ENCODE measurements at regions of chr4 and their contacts with region 1.

Region 1: GRCh38 chr4:61795998-61796397 is 595.9 kb downstream of the ADGRL3 start:
- DNase-seq: no peak
- ATAC-seq: no peak
- H3K4me3 ChIP-seq: no peak overlapping the region
- H3K4me3 Mint-ChIP-seq: no peak overlapping the region
- H3K27ac ChIP-seq: no peak overlapping the region
- H3K27ac Mint-ChIP-seq: no peak overlapping the region
- H3K4me1 ChIP-seq: no peaks in the 10 kb centered on the region
- H3K4me1 Mint-ChIP-seq: no peaks in the 10 kb centered on the region
- H3K27me3 ChIP-seq: no peaks in the 10 kb centered on the region
- H3K27me3 Mint-ChIP-seq: no peaks in the 10 kb centered on the region
- CTCF ChIP-seq: no peak

Region 2: DNA sequence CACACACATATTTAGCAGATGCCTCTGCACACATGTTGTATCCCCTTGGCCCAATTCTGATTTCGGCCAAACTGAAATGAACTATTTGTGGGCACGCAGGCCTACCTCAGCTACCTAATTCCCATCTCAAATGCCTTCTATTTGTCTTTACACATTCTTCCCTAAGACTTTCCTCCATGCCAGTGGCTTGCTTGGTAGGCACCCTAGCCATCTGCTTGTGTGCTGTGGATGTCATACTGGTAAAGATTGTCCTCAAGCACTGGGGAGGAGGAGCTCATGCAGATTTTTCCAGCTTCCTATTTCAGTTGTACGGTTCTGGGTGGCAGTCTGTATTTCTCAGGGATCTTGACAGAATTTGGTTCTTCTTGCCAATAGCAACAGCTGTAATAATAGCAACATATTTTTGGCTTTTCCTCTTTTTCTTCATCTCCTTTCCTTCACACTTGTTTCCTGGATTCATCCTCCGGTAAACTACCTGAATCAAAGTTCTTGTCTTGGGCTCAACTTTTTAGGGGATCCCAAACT is 81.5 kb before region 1 on chr4:
- CTCF ChIA-PET with region 1: no interaction called
- POLR2A ChIA-PET with region 1: no interaction called
- intact Hi-C with region 1: no loop called
- DNase-seq: no peak
- ATAC-seq: no peak
- H3K4me3 ChIP-seq: no peak overlapping the region
- H3K4me3 Mint-ChIP-seq: no peak overlapping the region
- H3K27ac ChIP-seq: no peak overlapping the region
- H3K27ac Mint-ChIP-seq: no peak overlapping the region
- H3K4me1 ChIP-seq: no peaks in the 10 kb centered on the region
- H3K4me1 Mint-ChIP-seq: no peaks in the 10 kb centered on the region
- H3K27me3 ChIP-seq: no peaks in the 10 kb centered on the region
- H3K27me3 Mint-ChIP-seq: no peaks in the 10 kb centered on the region
- CTCF ChIP-seq: no peak

Region 3: GRCh38 chr4:61739887-61740286 is 56.1 kb before region 1 on chr4:
- CTCF ChIA-PET with region 1: no interaction called
- POLR2A ChIA-PET with region 1: no interaction called
- intact Hi-C with region 1: loop called in 1 of 2 experiments (anchors 10 kb)
- DNase-seq: no peak
- ATAC-seq: no peak
- H3K4me3 ChIP-seq: no peak overlapping the region
- H3K4me3 Mint-ChIP-seq: no peak overlapping the region
- H3K27ac ChIP-seq: no peak overlapping the region
- H3K27ac Mint-ChIP-seq: no peak overlapping the region
- H3K4me1 ChIP-seq: no peaks in the 10 kb centered on the region
- H3K4me1 Mint-ChIP-seq: no peaks in the 10 kb centered on the region
- H3K27me3 ChIP-seq: no peaks in the 10 kb centered on the region
- H3K27me3 Mint-ChIP-seq: no peaks in the 10 kb centered on the region
- CTCF ChIP-seq: no peak

Region 4: DNA sequence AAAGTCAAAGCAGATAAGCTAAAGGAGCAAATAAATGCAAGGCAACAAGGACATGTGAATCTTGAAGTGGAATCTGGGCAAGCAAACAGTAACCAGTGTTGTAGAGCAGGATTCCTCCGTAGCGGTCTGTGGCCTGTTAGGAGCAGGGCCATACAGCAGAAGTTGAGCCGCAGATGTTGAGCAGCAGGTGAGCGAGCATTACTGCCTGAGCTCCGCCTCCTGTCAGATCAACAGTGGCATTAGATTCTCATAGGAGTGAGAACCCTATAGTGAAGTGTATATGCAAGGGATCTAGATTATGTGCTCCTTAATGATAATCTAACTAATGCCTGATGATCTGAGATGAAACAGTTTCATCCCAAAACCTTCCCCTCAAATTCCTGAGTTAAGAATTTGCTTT is 45.2 kb before region 1 on chr4:
- CTCF ChIA-PET with region 1: no interaction called
- POLR2A ChIA-PET with region 1: no interaction called
- intact Hi-C with region 1: no loop called
- DNase-seq: no peak
- ATAC-seq: no peak
- H3K4me3 ChIP-seq: no peak overlapping the region
- H3K4me3 Mint-ChIP-seq: no peak overlapping the region
- H3K27ac ChIP-seq: no peak overlapping the region
- H3K27ac Mint-ChIP-seq: no peak overlapping the region
- H3K4me1 ChIP-seq: no peaks in the 10 kb centered on the region
- H3K4me1 Mint-ChIP-seq: no peaks in the 10 kb centered on the region
- H3K27me3 ChIP-seq: no peaks in the 10 kb centered on the region
- H3K27me3 Mint-ChIP-seq: no peaks in the 10 kb centered on the region
- CTCF ChIP-seq: no peak

Region 5: GRCh38 chr4:61812171-61812570 is 16.2 kb after region 1 on chr4:
- CTCF ChIA-PET with region 1: no interaction called
- POLR2A ChIA-PET with region 1: no interaction called
- intact Hi-C with region 1: no loop called
- DNase-seq: no peak
- ATAC-seq: no peak
- H3K4me3 ChIP-seq: no peak overlapping the region
- H3K4me3 Mint-ChIP-seq: no peak overlapping the region
- H3K27ac ChIP-seq: no peak overlapping the region
- H3K27ac Mint-ChIP-seq: no peak overlapping the region
- H3K4me1 ChIP-seq: no peaks in the 10 kb centered on the region
- H3K4me1 Mint-ChIP-seq: no peaks in the 10 kb centered on the region
- H3K27me3 ChIP-seq: no peaks in the 10 kb centered on the region
- H3K27me3 Mint-ChIP-seq: no peaks in the 10 kb centered on the region
- CTCF ChIP-seq: no peak

Measured in CD8-positive, alpha-beta T cell (primary cell).